Activated CD4-positive, alpha-beta T cell treated with anti-CD3 and anti-CD28 coated beads for 36 hours (primary cell): ENCODE measurements at regions of chr18 and their contacts with region 1.

Region 1: GRCh38 chr18:59139371-59140298 is at the start of gene SEC11C:
- DNase-seq: peak; percentile 97
- ATAC-seq: peak; percentile 94
- H3K4me3 Mint-ChIP-seq: peak within 1 kb of the TSS; percentile 94
- H3K27ac Mint-ChIP-seq: peak within 1 kb of the TSS; percentile 95
- H3K4me1 Mint-ChIP-seq: peaks cover 42% of the 10 kb centered on the region
- H3K27me3 Mint-ChIP-seq: peaks cover 8% of the 10 kb centered on the region
- total RNA-seq, gene SEC11C: 53.5 to 70.2 TPM

Region 2: GRCh38 chr18:59035591-59035990 is 104.0 kb before region 1 on chr18:
- CTCF ChIA-PET with region 1: no interaction called
- POLR2A ChIA-PET with region 1: no interaction called
- intact Hi-C with region 1: loop called in 1 of 2 experiments (anchors 5 kb)
- DNase-seq: no peak
- ATAC-seq: no peak
- H3K4me3 Mint-ChIP-seq: no peak overlapping the region
- H3K27ac Mint-ChIP-seq: no peak overlapping the region
- H3K4me1 Mint-ChIP-seq: peaks cover 20% of the 10 kb centered on the region
- H3K27me3 Mint-ChIP-seq: peaks cover 9% of the 10 kb centered on the region

Region 3: GRCh38 chr18:59123588-59124369 is 15.9 kb before region 1 on chr18:
- CTCF ChIA-PET with region 1: no interaction called
- POLR2A ChIA-PET with region 1: interaction called, 11 read pairs
- intact Hi-C with region 1: loop called (anchors 1 to 2 kb)
- DNase-seq: peak; percentile 66
- ATAC-seq: peak; percentile 97
- H3K4me3 Mint-ChIP-seq: no peak overlapping the region
- H3K27ac Mint-ChIP-seq: no peak overlapping the region
- H3K4me1 Mint-ChIP-seq: peaks cover 5% of the 10 kb centered on the region
- H3K27me3 Mint-ChIP-seq: peaks cover 27% of the 10 kb centered on the region

Region 4: DNA sequence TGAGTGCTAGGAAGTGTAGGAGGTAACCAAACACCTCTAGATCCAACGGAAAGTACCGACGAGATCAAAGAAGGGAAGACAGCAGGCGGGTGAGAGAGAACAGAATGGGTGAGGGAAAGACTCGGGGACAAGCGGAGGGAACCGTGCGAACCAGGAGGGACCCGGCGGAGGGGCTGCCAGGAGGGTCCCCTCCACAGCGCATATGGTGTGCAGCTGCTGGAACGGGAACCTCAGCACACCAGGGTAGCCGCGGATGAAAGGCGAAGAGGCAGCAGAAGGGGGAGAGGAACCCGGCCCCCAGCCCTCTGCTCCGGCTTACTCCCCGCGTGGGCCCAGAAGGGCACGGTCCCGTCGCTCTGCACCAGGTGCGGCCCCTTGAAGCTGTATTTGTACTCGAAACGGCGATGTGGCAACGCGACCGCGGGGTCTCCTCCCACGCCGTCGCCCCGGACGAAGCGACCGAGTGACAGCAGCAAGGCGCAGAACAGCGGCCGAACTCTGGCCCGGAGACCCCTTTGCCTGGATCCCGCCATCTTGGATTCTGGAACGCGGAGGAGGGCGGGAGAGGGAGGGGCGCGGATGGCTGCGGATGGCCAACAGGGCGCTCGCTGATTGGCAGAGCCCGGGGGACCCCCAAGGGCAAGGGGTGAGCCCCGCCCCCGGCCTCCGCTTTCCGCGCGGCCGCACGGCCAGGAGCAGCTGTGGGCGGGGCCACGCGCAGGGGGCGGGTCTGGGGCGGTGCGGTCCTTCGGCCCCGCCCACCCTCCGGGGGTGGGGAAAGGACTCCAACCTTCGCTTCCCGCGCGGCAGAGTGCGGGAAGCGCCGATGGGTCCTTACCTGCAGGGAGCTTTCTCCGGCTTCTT is 219.3 kb after region 1 on chr18 and contains the start of gene LMAN1:
- CTCF ChIA-PET with region 1: no interaction called
- POLR2A ChIA-PET with region 1: no interaction called
- intact Hi-C with region 1: loop called (anchors 1 kb)
- DNase-seq: peak; percentile 97
- ATAC-seq: peak; percentile 93
- H3K4me3 Mint-ChIP-seq: peak within 1 kb of the TSS; percentile 98
- H3K27ac Mint-ChIP-seq: peak within 1 kb of the TSS; percentile 99
- H3K4me1 Mint-ChIP-seq: peaks cover 29% of the 10 kb centered on the region
- H3K27me3 Mint-ChIP-seq: no peaks in the 10 kb centered on the region
- total RNA-seq, gene LMAN1: 121 to 134 TPM